GM12878 (cell line): ENCODE measurements at regions of chr5 and their contacts with region 1.

Region 1: GRCh38 chr5:118987988-118988865 is at the start of gene DTWD2:
- DNase-seq: peak; percentile 81
- ATAC-seq: peak; percentile 96
- H3K4me3 ChIP-seq: peak within 1 kb of the TSS; percentile 74
- H3K27ac ChIP-seq: peak within 1 kb of the TSS; percentile 75
- H3K4me1 ChIP-seq: peaks cover 7% of the 10 kb centered on the region; the same call in 1 of the 2 replicates
- H3K27me3 ChIP-seq: no peaks in the 10 kb centered on the region
- CTCF ChIP-seq: peak; percentile 71 to 96 (median 92)
- EP300 ChIP-seq: 0 out of 4 replicates have a peak, but pooled peaks have one; percentile 8
- POLR2A ChIP-seq: peak; percentile 83
- RAD21 ChIP-seq: peak; percentile 86
- polyA plus RNA-seq, gene DTWD2: 0.93 to 1.0 TPM

Region 2: GRCh38 chr5:118937393-118938061 is 50.7 kb before region 1 on chr5:
- CTCF ChIA-PET with region 1: no interaction called
- POLR2A ChIA-PET with region 1: no interaction called
- RAD21 ChIA-PET with region 1: no interaction called
- SMC1A ChIA-PET with region 1: no interaction called
- in situ Hi-C with region 1: no loop called
- intact Hi-C with region 1: no loop called
- DNase-seq: peak; percentile 5
- ATAC-seq: peak; percentile 89
- H3K4me3 ChIP-seq: no peak overlapping the region
- H3K27ac ChIP-seq: no peak overlapping the region
- H3K4me1 ChIP-seq: no peaks in the 10 kb centered on the region
- H3K27me3 ChIP-seq: no peaks in the 10 kb centered on the region
- CTCF ChIP-seq: no peak
- EP300 ChIP-seq: no peak
- POLR2A ChIP-seq: no peak
- RAD21 ChIP-seq: no peak

Region 3: DNA sequence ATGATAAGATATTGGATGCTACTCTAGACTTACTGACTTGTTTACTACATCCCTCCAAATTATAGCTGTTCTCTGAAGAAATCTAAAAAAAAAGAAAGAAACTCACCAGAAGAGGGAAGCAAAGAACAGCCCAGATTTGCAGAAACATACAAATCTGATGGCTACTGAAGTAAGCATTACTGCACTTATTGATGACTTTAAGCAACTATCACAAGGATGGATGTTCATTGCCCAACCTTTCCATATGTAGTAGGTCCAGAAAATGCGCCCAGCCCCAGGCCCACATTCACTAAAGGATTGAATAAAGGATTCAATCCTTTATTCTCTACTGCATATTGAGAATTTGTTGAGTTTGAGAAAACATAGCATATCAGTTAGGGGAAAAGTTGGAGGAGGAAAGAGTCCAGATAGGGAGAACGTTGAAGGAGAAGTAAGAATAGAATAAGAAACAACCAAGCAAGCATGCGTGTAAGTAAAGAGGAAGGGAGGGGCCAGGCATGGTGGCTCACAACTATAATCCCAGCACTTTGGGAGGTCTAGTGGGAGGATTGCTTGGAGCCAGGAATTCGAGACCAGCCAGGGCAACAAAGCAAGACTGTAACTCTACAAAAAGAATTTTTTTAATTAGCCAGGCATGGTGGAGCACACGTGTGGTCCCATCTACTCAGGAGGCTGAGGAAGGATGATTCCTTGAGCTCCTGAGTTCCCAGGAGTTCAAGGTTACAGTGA is 34.0 kb after region 1 on chr5:
- CTCF ChIA-PET with region 1: interaction called, 12 read pairs
- POLR2A ChIA-PET with region 1: interaction called, 5 read pairs
- RAD21 ChIA-PET with region 1: interaction called, 26 read pairs
- SMC1A ChIA-PET with region 1: interaction called, 12 read pairs
- in situ Hi-C with region 1: no loop called
- intact Hi-C with region 1: loop called (anchors 2 kb)
- DNase-seq: no peak
- ATAC-seq: peak; percentile 87
- H3K4me3 ChIP-seq: no peak overlapping the region
- H3K27ac ChIP-seq: no peak overlapping the region
- H3K4me1 ChIP-seq: peaks cover 12% of the 10 kb centered on the region; the same call in 1 of the 2 replicates
- H3K27me3 ChIP-seq: no peaks in the 10 kb centered on the region
- CTCF ChIP-seq: peak; percentile 49 to 69 (median 54); a peak in 5 of 6 replicates
- EP300 ChIP-seq: no peak
- POLR2A ChIP-seq: no peak
- RAD21 ChIP-seq: peak; percentile 92

Region 4: GRCh38 chr5:119220576-119221197 is 232.5 kb after region 1 on chr5:
- CTCF ChIA-PET with region 1: interaction called, 4 read pairs
- POLR2A ChIA-PET with region 1: no interaction called
- RAD21 ChIA-PET with region 1: interaction called, 7 read pairs
- SMC1A ChIA-PET with region 1: interaction called, 7 read pairs
- in situ Hi-C with region 1: no loop called
- intact Hi-C with region 1: loop called (anchors 5 kb)
- DNase-seq: no peak
- ATAC-seq: peak; percentile 97
- H3K4me3 ChIP-seq: no peak overlapping the region
- H3K27ac ChIP-seq: no peak overlapping the region
- H3K4me1 ChIP-seq: peaks cover 6% of the 10 kb centered on the region; the same call in 1 of the 2 replicates
- H3K27me3 ChIP-seq: no peaks in the 10 kb centered on the region
- CTCF ChIP-seq: no peak
- EP300 ChIP-seq: no peak
- POLR2A ChIP-seq: no peak
- RAD21 ChIP-seq: no peak

Region 5: GRCh38 chr5:119290161-119290569 is 301.9 kb after region 1 on chr5:
- CTCF ChIA-PET with region 1: interaction called, 10 read pairs
- POLR2A ChIA-PET with region 1: no interaction called
- RAD21 ChIA-PET with region 1: interaction called, 8 read pairs
- SMC1A ChIA-PET with region 1: interaction called, 4 read pairs
- in situ Hi-C with region 1: no loop called
- intact Hi-C with region 1: no loop called
- DNase-seq: peak; percentile 66
- ATAC-seq: peak; percentile 90
- H3K4me3 ChIP-seq: peak overlapping the region; percentile 38
- H3K27ac ChIP-seq: peak overlapping the region; percentile 84
- H3K4me1 ChIP-seq: peaks cover 46% of the 10 kb centered on the region
- H3K27me3 ChIP-seq: no peaks in the 10 kb centered on the region
- CTCF ChIP-seq: no peak
- EP300 ChIP-seq: peak; percentile 69 to 79; a peak in 2 of 4 replicates
- POLR2A ChIP-seq: no peak
- RAD21 ChIP-seq: no peak

Region 6: GRCh38 chr5:119527351-119527750 is 539.1 kb after region 1 on chr5:
- CTCF ChIA-PET with region 1: no interaction called
- POLR2A ChIA-PET with region 1: no interaction called
- RAD21 ChIA-PET with region 1: no interaction called
- SMC1A ChIA-PET with region 1: no interaction called
- in situ Hi-C with region 1: no loop called
- intact Hi-C with region 1: loop called (anchors 5 kb)
- DNase-seq: no peak
- ATAC-seq: no peak
- H3K4me3 ChIP-seq: no peak overlapping the region
- H3K27ac ChIP-seq: no peak overlapping the region
- H3K4me1 ChIP-seq: no peaks in the 10 kb centered on the region
- H3K27me3 ChIP-seq: no peaks in the 10 kb centered on the region
- CTCF ChIP-seq: no peak
- EP300 ChIP-seq: no peak
- POLR2A ChIP-seq: no peak
- RAD21 ChIP-seq: no peak